MCF 10A (cell line): ENCODE measurements at regions of chr1 and their contacts with region 1.

Region 1: DNA sequence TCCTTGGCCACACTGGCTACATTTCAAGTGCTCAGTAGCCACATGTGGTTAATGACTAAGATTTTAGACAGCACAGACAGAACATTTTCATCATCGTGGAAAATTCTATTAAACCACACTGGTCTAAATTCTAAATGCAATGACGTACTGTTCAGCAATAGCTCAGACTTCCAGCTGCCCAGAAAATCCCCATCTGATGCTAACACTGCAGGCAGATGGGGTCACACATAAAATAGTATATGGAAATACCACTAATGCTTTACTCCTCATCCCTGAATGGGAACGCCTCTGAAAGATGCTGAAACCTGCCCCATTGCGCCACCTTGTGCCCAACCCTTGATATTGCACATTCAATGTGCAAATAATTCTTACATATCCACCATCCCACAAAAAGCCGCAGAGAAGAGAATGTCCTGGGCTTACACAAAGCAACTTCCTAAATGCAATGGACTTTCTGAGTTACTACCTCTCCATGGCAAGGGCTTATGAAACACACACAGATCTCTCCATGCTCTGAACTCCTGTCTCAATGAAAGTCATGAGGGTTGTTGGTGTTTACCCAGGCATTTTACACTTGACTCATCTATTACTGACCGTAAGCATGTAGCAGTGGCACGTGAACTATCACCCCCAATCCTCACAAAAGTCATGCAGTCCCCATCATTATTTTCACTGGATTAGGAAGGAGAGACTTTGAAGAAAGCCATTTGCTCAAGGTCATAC is 20.3 kb upstream of the SLC5A9 start:
- DNase-seq: peak; percentile 85
- H3K4me3 Mint-ChIP-seq: peak overlapping the region; percentile 25
- H3K27ac Mint-ChIP-seq: peak overlapping the region; percentile 78
- H3K4me1 Mint-ChIP-seq: peaks cover 54% of the 10 kb centered on the region
- H3K27me3 Mint-ChIP-seq: no peaks in the 10 kb centered on the region
- CTCF ChIP-seq: peak; percentile 75

Region 2: GRCh38 chr1:47738560-47739182 is 463.5 kb before region 1 on chr1:
- CTCF ChIA-PET with region 1: interaction called, 7 read pairs
- POLR2A ChIA-PET with region 1: no interaction called
- intact Hi-C with region 1: loop called (anchors 2 kb)
- DNase-seq: peak; percentile 73
- H3K4me3 Mint-ChIP-seq: no peak overlapping the region
- H3K27ac Mint-ChIP-seq: no peak overlapping the region
- H3K4me1 Mint-ChIP-seq: no peaks in the 10 kb centered on the region
- H3K27me3 Mint-ChIP-seq: peaks cover 25% of the 10 kb centered on the region
- CTCF ChIP-seq: peak; percentile 77

Region 3: GRCh38 chr1:48093696-48094528 is 108.3 kb before region 1 on chr1:
- CTCF ChIA-PET with region 1: interaction called, 65 read pairs
- POLR2A ChIA-PET with region 1: interaction called, 8 read pairs
- intact Hi-C with region 1: loop called (anchors 1 kb)
- DNase-seq: peak; percentile 79
- H3K4me3 Mint-ChIP-seq: peak overlapping the region; percentile 73
- H3K27ac Mint-ChIP-seq: no peak overlapping the region
- H3K4me1 Mint-ChIP-seq: peaks cover 18% of the 10 kb centered on the region
- H3K27me3 Mint-ChIP-seq: peaks cover 67% of the 10 kb centered on the region
- CTCF ChIP-seq: peak; percentile 79

Region 4: DNA sequence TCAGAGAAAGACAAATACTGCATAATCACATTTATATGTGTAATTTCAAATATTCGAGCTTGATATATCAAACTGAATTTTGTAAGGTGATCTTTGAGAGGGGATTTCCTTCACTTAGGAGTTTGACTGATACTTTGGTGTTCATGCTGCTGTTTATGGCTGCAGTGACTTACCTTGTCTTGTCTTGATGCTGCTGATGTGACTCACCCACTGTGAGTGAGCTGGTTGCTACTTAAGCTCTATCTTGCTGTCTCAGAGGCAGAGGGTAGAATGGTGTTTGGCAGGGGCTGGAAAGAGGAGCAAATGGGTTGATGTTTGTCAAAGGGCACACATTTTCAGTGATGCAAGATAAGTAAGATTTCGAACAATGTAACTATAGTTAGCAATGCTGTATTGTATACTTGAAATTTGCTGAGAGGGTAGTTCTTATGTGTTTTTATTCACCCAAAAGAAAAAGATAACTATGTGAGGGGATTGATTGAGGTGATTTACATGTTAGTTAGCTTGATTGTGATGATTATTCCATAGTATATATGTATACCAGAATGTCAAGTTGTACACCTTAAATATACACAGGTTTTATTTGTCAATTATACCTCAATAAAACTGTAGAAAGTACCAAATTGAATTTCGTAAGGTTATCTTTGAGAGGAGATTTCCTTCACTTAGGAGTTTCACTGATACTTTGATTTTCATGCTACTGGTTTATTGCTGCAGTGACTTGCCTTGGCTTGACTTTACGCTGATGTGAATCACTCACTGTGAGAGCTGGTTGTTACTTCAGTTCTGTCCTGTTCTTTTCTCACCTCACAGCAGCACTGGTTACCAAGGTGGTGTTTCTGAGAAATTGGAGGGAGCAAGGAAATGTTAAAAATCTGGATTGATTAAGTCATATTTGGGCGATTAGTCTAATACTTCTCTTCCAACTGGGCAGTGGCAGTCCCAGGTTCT is 74.2 kb before region 1 on chr1:
- CTCF ChIA-PET with region 1: interaction called, 6 read pairs
- POLR2A ChIA-PET with region 1: interaction called, 10 read pairs
- intact Hi-C with region 1: no loop called
- DNase-seq: peak; percentile 21
- H3K4me3 Mint-ChIP-seq: no peak overlapping the region
- H3K27ac Mint-ChIP-seq: peak overlapping the region; percentile 70
- H3K4me1 Mint-ChIP-seq: peaks cover 17% of the 10 kb centered on the region
- H3K27me3 Mint-ChIP-seq: no peaks in the 10 kb centered on the region
- CTCF ChIP-seq: no peak

Region 5: GRCh38 chr1:48182441-48182840 is 19.8 kb before region 1 on chr1:
- CTCF ChIA-PET with region 1: interaction called, 36 read pairs
- POLR2A ChIA-PET with region 1: interaction called, 26 read pairs
- intact Hi-C with region 1: loop called (anchors 1 kb)
- DNase-seq: peak; percentile 67
- H3K4me3 Mint-ChIP-seq: peak overlapping the region; percentile 66
- H3K27ac Mint-ChIP-seq: peak overlapping the region; percentile 88
- H3K4me1 Mint-ChIP-seq: peaks cover 48% of the 10 kb centered on the region
- H3K27me3 Mint-ChIP-seq: no peaks in the 10 kb centered on the region
- CTCF ChIP-seq: no peak

Region 6: DNA sequence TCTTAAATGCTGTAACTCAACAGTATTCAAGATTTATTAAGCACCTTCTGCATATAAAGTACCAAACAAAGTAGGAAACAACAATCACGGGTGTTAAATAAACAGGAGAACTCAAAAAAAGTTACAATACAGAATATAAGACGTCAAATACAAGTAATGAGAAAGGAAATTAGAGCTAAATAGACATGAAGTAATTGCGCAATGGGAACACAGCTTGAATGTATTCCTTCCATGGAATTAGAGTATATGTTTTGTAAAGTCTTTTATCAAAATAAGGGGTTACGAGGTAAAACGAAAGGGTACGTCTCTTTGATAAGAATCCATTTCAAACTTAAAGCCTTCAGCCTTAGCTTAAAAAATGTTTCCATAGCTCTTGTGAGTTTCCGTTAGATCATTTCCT is 160.7 kb after region 1 on chr1:
- CTCF ChIA-PET with region 1: no interaction called
- POLR2A ChIA-PET with region 1: no interaction called
- intact Hi-C with region 1: no loop called
- DNase-seq: no peak
- H3K4me3 Mint-ChIP-seq: no peak overlapping the region
- H3K27ac Mint-ChIP-seq: no peak overlapping the region
- H3K4me1 Mint-ChIP-seq: no peaks in the 10 kb centered on the region
- H3K27me3 Mint-ChIP-seq: no peaks in the 10 kb centered on the region
- CTCF ChIP-seq: no peak